ENCODE measurements at regions of chr6 and their contacts with region 1.

Region 1: GRCh38 chr6:36302227-36302976 is 32.5 kb downstream of the PNPLA1 start:
- DNase-seq: peak; percentile 36
- H3K4me3 ChIP-seq: no peak overlapping the region
- CTCF ChIP-seq: peak; percentile 92

Region 2: DNA sequence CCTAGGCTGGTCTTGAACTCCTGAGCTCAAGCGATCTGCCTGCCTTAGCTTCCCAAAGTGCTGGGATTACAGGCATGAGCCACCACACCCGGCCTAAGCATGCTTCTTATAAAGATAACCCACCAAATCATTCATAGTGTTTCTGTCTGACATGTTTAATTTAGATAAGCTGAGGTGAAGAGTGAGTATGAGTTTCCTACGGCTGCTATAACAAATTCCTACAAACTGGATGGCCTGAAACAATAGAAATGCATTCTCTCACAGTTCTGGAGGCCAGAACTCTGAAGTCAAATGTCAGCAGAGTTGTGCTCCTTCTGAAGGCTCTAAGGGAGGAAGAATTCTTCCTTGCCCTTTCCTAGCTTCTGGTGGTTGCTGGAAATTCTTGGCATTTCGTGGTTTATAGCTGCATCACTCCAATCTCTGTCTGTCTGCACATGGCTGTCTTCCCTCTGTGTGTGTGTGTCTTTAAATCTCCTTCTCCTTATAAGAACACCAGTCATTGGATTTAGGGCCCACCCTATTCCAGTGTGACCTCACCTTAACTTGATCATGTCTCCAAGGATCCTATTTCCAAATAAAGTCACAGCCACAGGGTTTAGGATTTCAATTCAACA is 142.1 kb before region 1 on chr6:
- CTCF ChIA-PET with region 1: no interaction called
- POLR2A ChIA-PET with region 1: no interaction called
- DNase-seq: no peak
- H3K4me3 ChIP-seq: no peak overlapping the region
- CTCF ChIP-seq: no peak

Region 3: DNA sequence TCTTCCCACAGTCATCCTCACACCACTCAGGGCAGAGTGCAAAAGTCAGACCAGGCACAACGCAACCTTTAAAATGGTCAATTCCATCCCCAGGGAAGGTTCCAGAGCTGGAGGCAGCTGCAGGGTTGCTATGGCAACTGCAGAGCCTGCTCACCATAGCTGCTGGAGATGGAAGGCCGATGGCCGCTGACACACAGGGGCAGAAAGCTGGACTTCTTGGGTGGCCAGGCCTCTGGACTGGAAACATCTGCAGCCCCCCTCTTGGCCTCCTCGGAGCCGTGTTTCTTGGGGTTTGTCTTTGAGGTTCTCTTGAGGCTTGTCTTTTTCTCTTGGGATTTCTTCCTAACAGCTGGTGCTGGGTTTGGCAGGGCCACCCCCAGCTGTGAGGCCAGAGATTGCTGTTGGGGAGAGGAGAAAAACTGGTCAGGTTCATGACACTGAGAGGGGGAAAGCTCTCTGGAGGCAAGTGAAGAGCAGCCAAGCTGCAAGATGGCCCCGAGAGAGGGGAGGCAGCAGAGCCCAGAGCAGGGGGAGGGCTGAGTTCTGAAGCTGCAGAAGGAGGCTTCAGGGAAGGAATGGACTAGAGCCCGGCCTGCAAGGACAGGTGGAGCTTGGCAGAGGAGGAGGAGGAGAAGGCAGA is 24.1 kb after region 1 on chr6:
- CTCF ChIA-PET with region 1: interaction called, 405 read pairs
- POLR2A ChIA-PET with region 1: no interaction called
- DNase-seq: no peak
- H3K4me3 ChIP-seq: no peak overlapping the region
- CTCF ChIP-seq: no peak

Region 4: DNA sequence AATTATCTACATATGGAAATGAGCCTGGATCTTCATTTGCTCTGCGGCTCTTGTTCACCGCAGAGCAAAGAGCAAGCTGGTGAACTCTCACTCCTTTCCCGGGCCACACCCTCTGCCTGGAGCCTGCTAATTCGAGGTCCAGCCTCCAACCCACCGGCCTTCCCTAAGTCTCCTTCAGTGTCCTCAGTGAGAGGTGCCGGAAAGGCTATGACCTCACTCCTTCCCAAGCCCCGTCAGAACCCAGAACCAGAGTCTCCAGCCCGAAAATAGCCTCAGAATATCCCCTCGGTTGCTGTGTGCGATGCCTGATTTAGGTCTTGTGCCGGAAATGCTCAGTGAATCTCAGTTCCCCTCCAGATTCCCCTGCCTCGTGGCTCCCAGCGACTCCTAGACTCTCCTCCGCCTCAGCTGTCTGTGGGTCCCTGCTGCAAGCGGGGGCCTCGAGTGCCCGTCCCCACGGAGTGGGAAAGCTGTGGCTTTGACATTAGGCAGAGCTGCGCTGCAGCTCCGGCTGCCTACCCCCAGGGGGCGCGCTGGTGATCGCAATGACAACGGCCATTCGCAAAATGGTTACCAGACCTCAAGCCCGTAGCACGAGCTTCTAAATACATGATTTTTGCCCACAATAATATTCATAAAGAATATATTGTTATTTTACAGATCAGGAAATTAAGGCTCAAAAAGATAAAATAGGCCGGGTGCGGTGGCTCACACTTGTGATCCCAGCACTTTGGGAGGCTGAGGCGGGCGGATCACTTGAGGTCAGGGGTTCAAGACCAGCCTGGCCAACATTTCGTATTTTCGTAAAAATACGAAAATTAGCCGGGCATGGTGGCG is 38.4 kb after region 1 on chr6:
- CTCF ChIA-PET with region 1: interaction called, 23 read pairs
- POLR2A ChIA-PET with region 1: no interaction called
- DNase-seq: no peak
- H3K4me3 ChIP-seq: peak overlapping the region; percentile 6
- CTCF ChIP-seq: peak; percentile 97

Region 5: DNA sequence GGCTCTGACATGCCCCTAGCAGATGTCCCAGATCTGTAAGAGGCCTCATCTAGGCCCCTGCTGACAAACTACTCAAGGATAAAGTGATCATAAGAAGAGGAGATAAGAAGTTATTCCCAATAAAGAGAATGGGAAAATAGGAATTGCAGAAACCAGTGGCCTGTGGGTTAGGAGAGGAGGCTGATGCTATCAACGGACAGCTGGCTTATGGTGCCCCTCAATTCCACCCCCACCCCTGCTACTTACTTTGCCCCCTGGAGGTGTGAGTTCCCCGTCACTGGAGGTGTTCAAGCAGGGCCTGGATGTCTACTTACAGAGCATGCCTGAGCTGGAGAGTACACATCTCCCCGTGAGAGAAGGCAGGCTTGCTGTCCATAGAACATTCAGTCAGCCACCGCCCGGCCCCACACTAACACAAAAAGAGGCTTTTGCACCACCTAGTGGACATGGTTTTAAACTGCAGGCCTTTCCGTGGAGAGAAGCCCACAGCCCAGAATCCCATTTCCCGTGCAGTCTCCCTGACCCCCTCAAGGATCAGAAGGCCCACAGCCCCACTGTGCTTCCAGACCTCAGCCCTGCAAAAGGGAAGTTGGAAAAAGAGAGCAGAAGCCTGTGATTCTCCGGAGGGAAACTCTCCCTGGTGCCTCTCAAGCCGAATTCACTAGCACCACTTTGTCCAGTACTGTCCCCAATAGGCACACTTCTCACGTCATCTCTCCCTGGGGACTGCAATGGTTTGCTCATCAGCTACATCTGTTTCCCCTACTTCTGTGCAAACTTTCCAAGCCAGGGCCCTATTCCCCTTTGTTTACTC is 58.0 kb after region 1 on chr6:
- CTCF ChIA-PET with region 1: interaction called, 332 read pairs
- POLR2A ChIA-PET with region 1: no interaction called
- DNase-seq: no peak
- H3K4me3 ChIP-seq: no peak overlapping the region
- CTCF ChIP-seq: peak; percentile 82

Measured in AG04449 (cell line).